A673 (cell line): ENCODE measurements at regions of chr18 and their contacts with region 1.

Region 1: GRCh38 chr18:34647251-34647650 is 62.8 kb upstream of the DTNA start:
- DNase-seq: peak; percentile 44
- H3K4me3 ChIP-seq: no peak overlapping the region
- H3K27ac ChIP-seq: no peak overlapping the region
- H3K4me1 ChIP-seq: no peaks in the 10 kb centered on the region
- H3K27me3 ChIP-seq: no peaks in the 10 kb centered on the region
- CTCF ChIP-seq: no peak

Region 2: GRCh38 chr18:33817096-33817495 is 830.2 kb before region 1 on chr18:
- CTCF ChIA-PET with region 1: no interaction called
- POLR2A ChIA-PET with region 1: no interaction called
- intact Hi-C with region 1: no loop called
- DNase-seq: no peak
- H3K4me3 ChIP-seq: no peak overlapping the region
- H3K27ac ChIP-seq: no peak overlapping the region
- H3K4me1 ChIP-seq: no peaks in the 10 kb centered on the region
- H3K27me3 ChIP-seq: no peaks in the 10 kb centered on the region
- CTCF ChIP-seq: no peak

Region 3: GRCh38 chr18:34352385-34353163 is 294.7 kb before region 1 on chr18:
- CTCF ChIA-PET with region 1: no interaction called
- POLR2A ChIA-PET with region 1: no interaction called
- intact Hi-C with region 1: loop called (anchors 10 kb)
- DNase-seq: peak; percentile 39
- H3K4me3 ChIP-seq: no peak overlapping the region
- H3K27ac ChIP-seq: no peak overlapping the region
- H3K4me1 ChIP-seq: no peaks in the 10 kb centered on the region
- H3K27me3 ChIP-seq: no peaks in the 10 kb centered on the region
- CTCF ChIP-seq: peak; percentile 49

Region 4: DNA sequence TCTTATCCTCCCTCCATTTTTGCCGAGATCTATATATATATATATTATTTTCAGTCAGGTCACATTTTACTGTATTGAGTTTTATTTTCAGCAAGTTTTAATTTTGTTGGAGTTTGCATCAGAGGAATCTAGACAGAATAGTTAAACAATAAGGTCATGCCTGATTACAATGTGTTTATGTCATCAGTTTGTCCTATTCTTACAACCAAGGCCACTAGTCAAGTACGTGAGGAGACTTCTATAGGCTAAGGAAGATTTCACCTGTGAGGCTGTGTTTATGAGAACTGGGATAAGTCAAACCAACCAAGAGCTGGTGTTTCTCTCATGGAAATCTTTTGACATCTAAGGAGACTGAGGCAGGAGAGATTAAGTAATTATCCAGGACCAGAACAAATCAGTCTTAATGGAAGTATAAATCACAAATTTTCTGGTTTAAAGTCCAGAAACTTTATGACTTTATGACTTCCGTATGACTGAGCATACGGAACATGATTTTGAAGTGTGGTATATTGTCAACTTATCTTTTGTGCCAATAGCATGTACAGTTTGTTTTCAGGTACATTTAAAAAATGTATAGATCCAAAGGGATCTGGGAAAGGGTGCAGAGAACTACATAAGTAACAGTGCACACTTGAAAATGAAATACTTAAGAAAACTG is 37.1 kb before region 1 on chr18:
- CTCF ChIA-PET with region 1: no interaction called
- POLR2A ChIA-PET with region 1: no interaction called
- intact Hi-C with region 1: loop called (anchors 5 kb)
- DNase-seq: no peak
- H3K4me3 ChIP-seq: no peak overlapping the region
- H3K27ac ChIP-seq: no peak overlapping the region
- H3K4me1 ChIP-seq: peaks cover 19% of the 10 kb centered on the region
- H3K27me3 ChIP-seq: no peaks in the 10 kb centered on the region
- CTCF ChIP-seq: no peak

Region 5: DNA sequence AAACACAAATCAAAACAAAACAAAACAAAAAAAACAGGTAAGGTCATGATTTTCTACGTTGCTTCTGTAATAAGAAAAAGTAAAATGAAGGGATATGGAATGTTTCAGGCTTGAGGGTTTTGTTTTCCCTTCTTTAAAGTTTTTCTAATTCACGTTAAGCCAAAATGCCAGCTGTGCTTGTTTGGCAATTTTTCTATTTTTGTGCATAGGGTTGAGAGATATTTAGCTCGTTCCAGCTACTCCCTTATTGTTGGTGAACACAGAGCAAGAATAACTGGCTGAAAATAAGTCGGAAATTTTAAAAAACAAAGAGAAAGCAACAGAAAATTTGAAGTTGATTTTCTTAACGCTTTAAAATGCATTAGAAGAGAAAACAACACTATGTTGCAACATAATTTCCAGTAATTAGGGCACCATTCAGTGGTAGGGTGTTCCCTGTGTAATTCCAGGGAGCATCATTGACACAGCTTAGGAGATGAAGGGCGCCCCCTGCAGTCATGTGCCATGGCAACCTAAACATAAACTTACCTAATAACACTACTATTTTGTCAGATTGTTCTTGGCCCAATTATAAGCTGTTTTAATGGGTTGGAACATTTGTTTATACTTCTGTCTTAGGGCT is 162.3 kb after region 1 on chr18:
- CTCF ChIA-PET with region 1: no interaction called
- POLR2A ChIA-PET with region 1: no interaction called
- intact Hi-C with region 1: no loop called
- DNase-seq: peak; percentile 79
- H3K4me3 ChIP-seq: no peak overlapping the region
- H3K27ac ChIP-seq: no peak overlapping the region
- H3K4me1 ChIP-seq: no peaks in the 10 kb centered on the region
- H3K27me3 ChIP-seq: no peaks in the 10 kb centered on the region
- CTCF ChIP-seq: peak; percentile 85